ENCODE measurements at regions of chr12 and their contacts with region 1.

Region 1: DNA sequence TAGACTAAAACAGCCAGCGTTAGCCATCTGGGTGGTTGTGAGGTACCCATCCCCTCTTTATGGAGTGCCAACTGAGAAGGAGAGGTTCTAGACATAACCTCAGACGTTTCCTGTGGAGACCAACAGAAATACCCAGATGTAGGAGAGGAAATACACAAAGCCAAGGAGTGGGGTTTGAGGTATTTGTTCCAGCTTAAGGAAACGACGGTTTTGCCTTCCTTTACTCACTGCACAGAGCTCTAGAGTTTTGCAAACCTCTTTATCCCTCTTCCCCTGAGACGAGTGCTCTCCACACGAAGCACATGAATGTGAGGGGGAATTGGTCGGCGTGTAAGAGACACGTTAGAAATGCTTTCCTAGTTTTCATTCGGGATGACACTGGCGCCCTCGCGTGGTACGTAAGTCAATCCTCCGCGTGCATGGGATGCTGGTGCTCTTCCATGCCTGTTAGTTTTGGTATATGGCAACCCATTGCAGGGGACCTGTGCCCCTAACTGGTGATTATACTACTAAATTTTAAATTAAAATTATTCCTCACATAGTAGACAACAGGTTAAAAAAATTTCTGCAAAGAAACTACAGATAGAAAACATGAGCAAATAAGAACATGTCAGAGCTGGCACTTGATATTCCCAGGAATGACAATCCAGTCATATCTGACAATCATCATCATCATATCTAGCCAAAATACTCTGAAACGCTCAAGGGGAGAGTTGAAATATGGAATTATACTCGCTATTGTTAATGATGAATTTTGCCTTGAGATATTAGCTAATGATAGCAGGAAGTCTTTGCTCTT is 121.7 kb downstream of the PPM1H start:
- DNase-seq: peak; percentile 42
- ATAC-seq: peak; percentile 95
- H3K4me3 ChIP-seq: peak overlapping the region in 1 of 2 experiments; percentile 32; a peak in 2 of 4 replicates
- H3K27ac ChIP-seq: peak overlapping the region; percentile 12
- H3K4me1 ChIP-seq: no peaks in the 10 kb centered on the region
- H3K27me3 ChIP-seq: no peaks in the 10 kb centered on the region
- CTCF ChIP-seq: peak; percentile 91

Region 2: GRCh38 chr12:62435303-62436163 is 377.7 kb before region 1 on chr12:
- CTCF ChIA-PET with region 1: no interaction called
- POLR2A ChIA-PET with region 1: no interaction called
- in situ Hi-C with region 1: no loop called
- intact Hi-C with region 1: loop called (anchors 5 kb)
- DNase-seq: peak; percentile 15
- ATAC-seq: peak; percentile 95
- H3K4me3 ChIP-seq: peak overlapping the region; percentile 49 to 66
- H3K27ac ChIP-seq: no peak overlapping the region
- H3K4me1 ChIP-seq: no peaks in the 10 kb centered on the region; the same call in 1 of the 2 replicates
- H3K27me3 ChIP-seq: peaks cover 10% of the 10 kb centered on the region; the same call in 1 of the 2 replicates
- CTCF ChIP-seq: peak; percentile 81

Region 3: DNA sequence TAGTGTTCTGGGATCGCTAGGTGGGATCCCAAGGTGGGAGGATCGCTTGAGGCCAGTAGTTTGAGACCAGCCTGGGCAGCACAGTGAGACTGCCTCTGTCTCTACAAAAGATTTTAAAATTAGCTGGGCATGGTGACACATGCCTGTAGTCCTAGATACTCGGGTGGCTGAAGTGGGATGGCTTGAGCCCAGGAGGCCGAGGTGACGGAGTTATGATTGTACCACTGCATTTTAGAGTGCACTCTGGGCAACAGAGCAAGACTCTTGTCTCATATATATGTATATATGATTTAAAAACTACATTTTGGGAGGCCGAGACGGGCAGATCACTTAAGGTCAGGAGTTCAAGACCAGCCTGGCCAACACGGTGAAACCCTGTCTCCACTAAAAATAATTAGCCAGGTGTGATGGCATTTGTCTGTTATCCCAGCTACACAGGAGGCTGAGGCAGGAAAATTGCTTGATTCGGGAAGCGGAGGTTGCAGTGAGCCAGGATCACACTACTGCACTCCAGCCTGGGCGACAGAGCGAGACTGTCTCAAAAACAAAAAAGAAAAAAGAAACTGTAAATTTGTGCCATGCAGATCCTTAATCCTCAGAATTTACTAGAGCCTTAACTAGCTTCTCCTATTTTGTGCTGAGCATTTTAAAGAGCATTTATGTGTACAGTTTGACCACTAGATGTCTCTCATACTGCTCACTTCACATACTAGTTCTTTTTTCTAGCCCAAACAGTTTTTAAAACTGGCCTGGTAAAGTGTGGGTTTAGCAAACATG is 231.8 kb before region 1 on chr12:
- CTCF ChIA-PET with region 1: no interaction called
- POLR2A ChIA-PET with region 1: no interaction called
- in situ Hi-C with region 1: no loop called
- intact Hi-C with region 1: no loop called
- DNase-seq: no peak
- ATAC-seq: peak; percentile 87
- H3K4me3 ChIP-seq: no peak overlapping the region
- H3K27ac ChIP-seq: no peak overlapping the region
- H3K4me1 ChIP-seq: no peaks in the 10 kb centered on the region
- H3K27me3 ChIP-seq: no peaks in the 10 kb centered on the region
- CTCF ChIP-seq: peak; percentile 78

Region 4: GRCh38 chr12:62778187-62778586 is 35.0 kb before region 1 on chr12:
- CTCF ChIA-PET with region 1: interaction called, 18 read pairs
- POLR2A ChIA-PET with region 1: no interaction called
- in situ Hi-C with region 1: no loop called
- intact Hi-C with region 1: no loop called
- DNase-seq: no peak
- ATAC-seq: no peak
- H3K4me3 ChIP-seq: no peak overlapping the region
- H3K27ac ChIP-seq: no peak overlapping the region; the same call in 1 of the 2 replicates
- H3K4me1 ChIP-seq: no peaks in the 10 kb centered on the region
- H3K27me3 ChIP-seq: no peaks in the 10 kb centered on the region
- CTCF ChIP-seq: no peak

Region 5: GRCh38 chr12:63068857-63069442 is 255.7 kb after region 1 on chr12:
- CTCF ChIA-PET with region 1: interaction called, 3 read pairs
- POLR2A ChIA-PET with region 1: no interaction called
- in situ Hi-C with region 1: no loop called
- intact Hi-C with region 1: loop called (anchors 2 kb)
- DNase-seq: peak; percentile 28
- ATAC-seq: peak; percentile 69; the same call in 1 of the 2 replicates
- H3K4me3 ChIP-seq: no peak overlapping the region
- H3K27ac ChIP-seq: no peak overlapping the region
- H3K4me1 ChIP-seq: no peaks in the 10 kb centered on the region
- H3K27me3 ChIP-seq: no peaks in the 10 kb centered on the region
- CTCF ChIP-seq: peak; percentile 64; the same call in 1 of the 2 replicates